K562 (cell line): ENCODE measurements at regions of chr16 and their contacts with region 1.

Region 1: GRCh38 chr16:19114352-19115052 is 738 bp downstream of the ITPRIPL2 start:
- DNase-seq: peak in 1 of 4 experiments; percentile 23
- ATAC-seq: no peak; the same call in 2 of the 3 replicates
- H3K4me3 ChIP-seq: peak overlapping the region; percentile 47
- H3K27ac ChIP-seq: no peak overlapping the region
- H3K4me1 ChIP-seq: peaks cover 20 to 32% of the 10 kb centered on the region in 2 experiments
- H3K27me3 ChIP-seq: no peaks in the 10 kb centered on the region
- CTCF ChIP-seq: no peak
- EP300 ChIP-seq: no peak
- POLR2A ChIP-seq: no peak
- RAD21 ChIP-seq: no peak

Region 2: DNA sequence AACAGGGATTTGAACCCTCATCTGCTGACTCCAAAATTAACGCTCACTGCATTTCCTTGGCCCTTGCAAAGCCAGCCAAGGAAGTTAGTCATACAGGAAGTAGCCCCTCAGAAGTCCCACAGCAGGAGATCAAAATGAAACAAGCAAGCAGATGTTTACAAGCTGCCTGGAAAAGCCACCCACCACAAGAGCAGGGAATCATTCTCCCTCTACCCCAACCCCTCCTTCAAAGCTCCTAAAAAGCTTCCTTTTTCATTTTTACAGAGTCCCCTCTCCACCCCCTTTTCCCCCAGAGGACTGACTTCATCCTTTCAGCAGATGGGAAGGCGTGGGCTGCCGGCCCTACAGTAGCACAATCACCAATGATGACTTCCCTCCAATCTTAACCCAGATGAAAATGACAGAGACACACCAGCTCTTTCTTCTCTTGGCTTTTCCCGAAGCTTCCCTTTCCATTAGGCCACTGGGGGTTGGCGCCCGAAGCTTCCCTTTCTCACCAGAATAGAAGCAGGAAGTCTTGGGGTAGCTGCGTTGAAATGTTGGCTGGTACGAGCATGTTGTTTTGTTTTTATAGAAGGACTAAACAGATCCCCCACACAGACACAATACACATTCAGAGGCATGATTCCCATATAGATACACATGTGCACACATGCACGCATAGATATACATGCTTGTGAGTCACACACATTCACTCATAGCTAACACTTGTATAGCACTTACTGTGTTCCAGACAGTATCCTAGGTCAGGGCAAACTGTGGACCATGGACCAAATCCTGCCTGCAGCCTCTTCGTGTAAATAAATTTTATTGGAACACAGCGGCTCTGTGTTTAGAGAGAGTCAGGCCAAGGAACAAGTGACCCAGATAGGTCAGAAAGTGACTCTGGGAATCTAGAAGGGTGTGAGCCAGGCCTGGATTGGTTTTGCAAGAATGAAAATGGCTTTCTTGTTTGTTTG is 16.6 kb after region 1 on chr16:
- CTCF ChIA-PET with region 1: no interaction called
- POLR2A ChIA-PET with region 1: interaction called, 18 read pairs
- in situ Hi-C with region 1: no loop called
- intact Hi-C with region 1: no loop called
- DNase-seq: peak in 2 of 4 experiments; percentile 40 to 42
- ATAC-seq: peak; percentile 58
- H3K4me3 ChIP-seq: no peak overlapping the region
- H3K27ac ChIP-seq: peak overlapping the region; percentile 31; the same call in 1 of the 3 replicates
- H3K4me1 ChIP-seq: peaks cover 14 to 24% of the 10 kb centered on the region in 2 experiments
- H3K27me3 ChIP-seq: no peaks in the 10 kb centered on the region
- CTCF ChIP-seq: no peak
- EP300 ChIP-seq: no peak
- POLR2A ChIP-seq: no peak
- RAD21 ChIP-seq: no peak

Region 3: GRCh38 chr16:19468300-19468699 is 353.8 kb after region 1 on chr16:
- CTCF ChIA-PET with region 1: no interaction called
- POLR2A ChIA-PET with region 1: no interaction called
- in situ Hi-C with region 1: no loop called
- intact Hi-C with region 1: loop called (anchors 5 kb)
- DNase-seq: no peak
- ATAC-seq: no peak
- H3K4me3 ChIP-seq: no peak overlapping the region
- H3K27ac ChIP-seq: no peak overlapping the region
- H3K4me1 ChIP-seq: no peaks in the 10 kb centered on the region; a peak in 1 of 5 replicates
- H3K27me3 ChIP-seq: no peaks in the 10 kb centered on the region
- CTCF ChIP-seq: no peak
- EP300 ChIP-seq: no peak
- POLR2A ChIP-seq: no peak
- RAD21 ChIP-seq: no peak